Gastrocnemius medialis (tissue), 4 donors: ENCODE measurements at regions of chr1 and their contacts with region 1.

Region 1: DNA sequence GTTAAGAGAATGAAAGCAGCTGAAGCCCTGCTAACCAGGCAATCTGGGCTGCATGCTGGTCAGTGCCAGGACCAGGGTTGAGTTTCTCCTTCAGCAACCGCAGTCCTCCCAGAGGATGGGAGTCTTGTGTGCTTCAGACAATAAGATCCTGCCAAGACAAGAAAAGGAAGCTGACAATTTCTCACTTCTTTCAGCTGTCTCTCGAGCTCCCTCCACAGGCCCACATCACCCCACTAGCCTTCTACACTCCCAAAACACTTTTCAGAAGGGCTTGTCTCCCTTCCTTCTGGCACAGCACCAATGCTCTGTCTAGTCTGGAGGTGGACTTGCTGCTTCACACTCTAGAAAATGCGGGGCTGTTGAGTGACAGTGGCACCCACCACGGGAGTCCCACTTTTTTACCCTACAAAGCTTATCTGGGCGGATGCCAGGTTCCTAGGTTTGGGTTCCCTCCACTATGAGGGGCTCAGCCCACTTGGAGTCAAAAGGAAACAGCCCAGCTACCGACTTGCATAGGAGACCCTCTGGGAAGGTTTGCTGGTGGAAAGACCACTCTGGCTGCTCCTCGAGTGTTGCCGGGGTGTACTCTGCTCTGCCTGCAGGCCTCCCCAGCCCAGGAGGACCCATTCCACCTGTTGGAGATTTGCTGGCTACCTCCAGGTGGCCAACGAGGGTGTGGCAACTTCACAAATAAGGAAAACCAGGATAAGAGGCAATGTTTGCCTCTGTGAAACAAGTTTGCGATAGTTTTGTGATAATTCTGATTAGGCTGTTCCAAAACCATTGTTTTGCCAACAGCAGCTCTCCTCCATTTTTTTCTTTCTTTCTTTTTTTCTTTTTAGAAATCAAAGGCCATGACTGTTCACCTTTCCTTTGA is 68.9 kb downstream of the TENT5C start:
- DNase-seq: peak in 1 of 2 donors; percentile 55
- ATAC-seq: peak; percentile 18 to 35
- H3K4me3 ChIP-seq: no peak overlapping the region
- H3K27ac ChIP-seq: peak overlapping the region; percentile 84 to 95 (median 94)
- H3K4me1 ChIP-seq: peaks cover 71 to 73% of the 10 kb centered on the region in 2 donors
- H3K27me3 ChIP-seq: no peaks in the 10 kb centered on the region
- CTCF ChIP-seq: peak in 3 of 5 experiments; percentile 12 to 34 (median 20)
- POLR2A ChIP-seq: no peak

Region 2: DNA sequence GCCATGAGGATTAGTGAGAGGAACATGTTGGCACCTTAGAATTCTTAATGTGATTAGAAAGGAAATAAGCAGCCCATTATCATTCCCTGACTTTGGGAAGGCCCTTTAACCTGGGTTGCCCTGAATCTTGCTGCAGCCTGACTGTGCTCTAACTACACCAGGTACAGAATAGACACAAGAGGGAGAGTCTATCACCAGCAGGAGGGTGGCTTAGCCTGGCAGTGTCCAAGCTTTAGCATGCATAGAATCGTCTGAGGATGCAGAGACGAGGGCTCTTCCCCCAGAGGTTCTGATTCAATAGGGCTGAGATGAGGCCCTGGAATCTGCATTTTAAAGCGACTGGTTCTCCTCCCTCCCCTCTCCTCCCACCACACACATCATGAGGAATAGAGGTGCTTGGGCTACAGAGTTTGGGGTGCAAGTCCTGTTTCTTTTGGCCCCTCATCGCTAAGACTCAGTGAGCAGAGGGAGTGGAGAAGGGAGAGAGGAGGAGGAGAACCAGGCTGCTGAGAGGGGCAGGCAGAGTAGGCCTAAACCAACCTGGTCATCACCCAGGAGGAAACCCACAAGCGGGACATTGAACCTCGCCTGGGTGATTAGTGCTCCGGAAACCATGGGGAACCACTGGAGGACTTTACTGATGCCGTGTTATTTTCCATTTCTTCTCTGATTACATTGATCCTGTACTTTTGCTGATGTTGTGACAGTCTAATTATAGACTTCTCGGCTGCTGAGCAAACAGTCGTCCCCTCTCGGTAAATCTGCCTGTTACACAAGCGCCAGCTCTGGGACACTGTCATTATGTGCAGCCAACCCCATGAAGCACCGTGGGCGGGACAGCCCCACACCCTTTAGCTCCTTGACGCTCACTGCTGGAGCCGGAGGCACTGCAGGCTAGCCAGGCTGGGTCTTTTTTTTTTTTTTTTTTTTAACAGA is 75.2 kb before region 1 on chr1:
- in situ Hi-C with region 1: no loop called
- intact Hi-C with region 1: loop called (anchors 2 kb)
- DNase-seq: peak; percentile 83 to 90
- ATAC-seq: peak; percentile 94
- H3K4me3 ChIP-seq: peak overlapping the region in 1 of 4 donors; percentile 23
- H3K27ac ChIP-seq: peak overlapping the region; percentile 87 to 90 (median 88)
- H3K4me1 ChIP-seq: peaks cover 31 to 40% of the 10 kb centered on the region in 2 donors
- H3K27me3 ChIP-seq: no peaks in the 10 kb centered on the region
- CTCF ChIP-seq: peak in 1 of 5 experiments; percentile 10
- POLR2A ChIP-seq: peak; percentile 17 to 50